ENCODE measurements at regions of chr4 and their contacts with region 1.

Region 1: DNA sequence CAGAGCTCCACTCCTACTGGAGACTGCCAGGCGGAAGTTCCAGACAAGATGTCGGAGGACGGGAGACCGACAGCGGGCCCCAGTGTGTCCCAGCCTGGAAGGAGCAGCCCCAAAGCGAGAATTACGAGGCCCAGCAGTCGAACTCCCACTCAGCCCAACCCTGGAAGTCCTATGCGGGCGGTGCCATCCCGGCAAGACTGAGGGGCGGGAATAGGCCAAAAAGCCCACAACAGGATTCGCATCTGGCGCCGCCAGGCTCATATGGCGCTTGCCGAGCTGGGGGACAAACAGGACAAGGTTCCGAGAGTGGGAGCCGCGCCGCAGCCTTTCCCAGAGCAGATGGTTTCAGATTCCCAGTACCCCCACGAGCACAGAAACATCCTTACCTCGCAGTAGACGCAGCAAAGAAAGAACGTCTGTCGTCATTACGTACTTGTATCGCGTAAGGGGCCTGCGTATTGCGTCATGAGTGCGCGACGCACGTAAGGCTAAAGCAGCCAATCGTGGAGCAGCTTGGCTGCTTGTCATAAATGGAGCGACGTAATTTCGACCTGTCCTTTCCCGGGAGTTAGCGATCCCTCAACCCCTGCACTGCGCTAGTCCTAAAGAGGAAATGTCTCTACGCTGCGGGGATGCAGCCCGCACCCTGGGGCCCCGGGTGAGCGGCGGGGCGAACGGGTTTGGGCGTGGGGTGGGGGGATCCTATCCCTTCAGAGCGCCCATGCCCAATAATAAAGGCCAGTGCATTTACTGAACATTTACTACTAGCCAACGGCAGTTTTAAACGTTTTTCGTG is at the starts of genes LIAS and RPL9:
- DNase-seq: peak; percentile 96
- H3K4me3 Mint-ChIP-seq: peak within 1 kb of the TSS; percentile 93
- H3K27ac Mint-ChIP-seq: peak within 1 kb of the TSS; percentile 97
- H3K4me1 Mint-ChIP-seq: peaks cover 48% of the 10 kb centered on the region
- H3K27me3 Mint-ChIP-seq: peaks cover 1% of the 10 kb centered on the region
- total RNA-seq, gene LIAS: 23.2 to 23.7 TPM
- total RNA-seq, gene RPL9: 2,178 to 2,222 TPM

Region 2: DNA sequence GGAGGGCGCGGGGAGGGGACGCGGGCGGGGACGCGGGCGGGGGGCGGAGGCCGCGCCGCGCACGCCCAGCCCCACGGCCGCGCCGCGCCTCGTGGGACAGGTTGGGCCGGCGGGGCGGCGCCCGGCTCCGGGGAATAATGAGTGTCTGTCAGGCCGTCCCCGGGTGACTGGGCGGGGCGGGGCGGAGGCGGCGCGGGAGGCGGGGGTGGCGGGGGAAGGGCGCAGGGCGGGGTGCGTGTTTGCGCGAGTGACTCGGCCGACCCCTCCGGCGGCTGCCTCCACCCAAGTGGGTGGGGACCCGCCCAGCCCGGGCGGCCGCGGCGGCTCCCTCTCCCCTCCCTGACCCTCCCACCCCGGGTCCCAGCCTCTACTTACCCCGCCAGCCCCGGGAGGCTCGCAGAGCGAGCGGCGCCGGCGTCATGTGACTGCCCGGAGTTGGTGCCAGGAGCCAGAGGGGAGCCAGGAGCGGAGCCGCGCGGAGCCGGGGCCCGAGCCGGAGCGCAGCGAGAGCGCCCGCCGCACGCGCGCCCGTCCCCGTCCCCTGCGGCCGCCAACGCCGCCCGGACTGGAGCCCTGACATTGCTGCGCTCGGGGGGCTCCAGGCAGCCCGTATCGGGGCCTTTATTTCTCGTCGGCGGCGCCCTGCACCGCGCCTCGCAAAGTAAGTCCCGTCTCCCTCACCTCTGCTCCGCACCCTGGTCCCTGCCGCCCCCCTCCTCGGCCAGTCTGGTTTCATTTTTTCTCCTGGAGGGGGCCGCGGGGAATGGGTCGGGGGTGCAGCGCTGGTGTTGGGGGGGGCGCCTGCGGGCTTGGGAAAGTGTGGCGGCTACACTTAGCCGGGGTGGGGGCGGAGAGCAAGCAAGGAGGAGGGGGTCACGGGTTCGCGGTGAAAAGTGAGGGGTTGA is 794.6 kb before region 1 on chr4 and contains the start of gene KLF3:
- CTCF ChIA-PET with region 1: no interaction called
- POLR2A ChIA-PET with region 1: no interaction called
- intact Hi-C with region 1: no loop called
- DNase-seq: peak; percentile 86
- H3K4me3 Mint-ChIP-seq: peak within 1 kb of the TSS; percentile 83
- H3K27ac Mint-ChIP-seq: peak within 1 kb of the TSS; percentile 68
- H3K4me1 Mint-ChIP-seq: peaks cover 61% of the 10 kb centered on the region
- H3K27me3 Mint-ChIP-seq: no peaks in the 10 kb centered on the region
- total RNA-seq, gene KLF3: 9.1 to 9.9 TPM

Region 3: GRCh38 chr4:38818441-38818976 is 640.2 kb before region 1 on chr4:
- CTCF ChIA-PET with region 1: no interaction called
- POLR2A ChIA-PET with region 1: no interaction called
- intact Hi-C with region 1: no loop called
- DNase-seq: no peak
- H3K4me3 Mint-ChIP-seq: no peak overlapping the region
- H3K27ac Mint-ChIP-seq: no peak overlapping the region
- H3K4me1 Mint-ChIP-seq: peaks cover 22% of the 10 kb centered on the region
- H3K27me3 Mint-ChIP-seq: no peaks in the 10 kb centered on the region

Region 4: GRCh38 chr4:38889143-38889542 is 569.6 kb before region 1 on chr4:
- CTCF ChIA-PET with region 1: no interaction called
- POLR2A ChIA-PET with region 1: no interaction called
- intact Hi-C with region 1: loop called (anchors 5 kb)
- DNase-seq: no peak
- H3K4me3 Mint-ChIP-seq: peak overlapping the region; percentile 48
- H3K27ac Mint-ChIP-seq: peak overlapping the region; percentile 81
- H3K4me1 Mint-ChIP-seq: peaks cover 22% of the 10 kb centered on the region
- H3K27me3 Mint-ChIP-seq: no peaks in the 10 kb centered on the region

Region 5: DNA sequence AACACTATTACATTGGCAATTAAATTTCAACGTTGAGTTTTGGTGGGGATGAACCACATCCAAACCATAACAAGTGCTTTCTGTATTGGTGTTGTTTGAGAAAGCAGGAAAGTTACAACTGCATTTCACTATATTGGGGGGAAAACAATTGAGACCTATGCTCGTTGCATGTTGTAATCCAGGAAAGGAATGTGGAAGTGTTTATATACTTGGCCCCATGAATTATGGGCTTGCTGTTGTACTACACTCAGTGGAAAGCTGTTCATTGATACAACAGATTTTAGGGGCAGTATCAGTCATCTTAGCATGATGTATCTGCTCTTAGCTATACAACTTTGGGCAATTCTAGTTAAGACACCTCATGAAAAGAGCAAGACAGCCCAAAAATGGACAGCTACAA is 344.3 kb before region 1 on chr4:
- CTCF ChIA-PET with region 1: no interaction called
- POLR2A ChIA-PET with region 1: no interaction called
- intact Hi-C with region 1: no loop called
- DNase-seq: no peak
- H3K4me3 Mint-ChIP-seq: no peak overlapping the region
- H3K27ac Mint-ChIP-seq: no peak overlapping the region
- H3K4me1 Mint-ChIP-seq: peaks cover 23% of the 10 kb centered on the region
- H3K27me3 Mint-ChIP-seq: no peaks in the 10 kb centered on the region

Region 6: GRCh38 chr4:39181905-39182638 is 276.6 kb before region 1 on chr4 and contains the start of gene WDR19:
- CTCF ChIA-PET with region 1: no interaction called
- POLR2A ChIA-PET with region 1: interaction called, 3 read pairs
- intact Hi-C with region 1: loop called (anchors 1 kb)
- DNase-seq: peak; percentile 99
- H3K4me3 Mint-ChIP-seq: no peak within 1 kb of the TSS
- H3K27ac Mint-ChIP-seq: no peak within 1 kb of the TSS
- H3K4me1 Mint-ChIP-seq: peaks cover 5% of the 10 kb centered on the region
- H3K27me3 Mint-ChIP-seq: no peaks in the 10 kb centered on the region
- total RNA-seq, gene WDR19: 16.4 to 17.9 TPM

Region 7: GRCh38 chr4:39446751-39447573 is 11.7 kb before region 1 on chr4:
- CTCF ChIA-PET with region 1: interaction called, 4 read pairs
- POLR2A ChIA-PET with region 1: interaction called, 17 read pairs
- intact Hi-C with region 1: no loop called
- DNase-seq: peak; percentile 67
- H3K4me3 Mint-ChIP-seq: peak overlapping the region; percentile 32
- H3K27ac Mint-ChIP-seq: no peak overlapping the region
- H3K4me1 Mint-ChIP-seq: peaks cover 33% of the 10 kb centered on the region
- H3K27me3 Mint-ChIP-seq: no peaks in the 10 kb centered on the region

Region 8: DNA sequence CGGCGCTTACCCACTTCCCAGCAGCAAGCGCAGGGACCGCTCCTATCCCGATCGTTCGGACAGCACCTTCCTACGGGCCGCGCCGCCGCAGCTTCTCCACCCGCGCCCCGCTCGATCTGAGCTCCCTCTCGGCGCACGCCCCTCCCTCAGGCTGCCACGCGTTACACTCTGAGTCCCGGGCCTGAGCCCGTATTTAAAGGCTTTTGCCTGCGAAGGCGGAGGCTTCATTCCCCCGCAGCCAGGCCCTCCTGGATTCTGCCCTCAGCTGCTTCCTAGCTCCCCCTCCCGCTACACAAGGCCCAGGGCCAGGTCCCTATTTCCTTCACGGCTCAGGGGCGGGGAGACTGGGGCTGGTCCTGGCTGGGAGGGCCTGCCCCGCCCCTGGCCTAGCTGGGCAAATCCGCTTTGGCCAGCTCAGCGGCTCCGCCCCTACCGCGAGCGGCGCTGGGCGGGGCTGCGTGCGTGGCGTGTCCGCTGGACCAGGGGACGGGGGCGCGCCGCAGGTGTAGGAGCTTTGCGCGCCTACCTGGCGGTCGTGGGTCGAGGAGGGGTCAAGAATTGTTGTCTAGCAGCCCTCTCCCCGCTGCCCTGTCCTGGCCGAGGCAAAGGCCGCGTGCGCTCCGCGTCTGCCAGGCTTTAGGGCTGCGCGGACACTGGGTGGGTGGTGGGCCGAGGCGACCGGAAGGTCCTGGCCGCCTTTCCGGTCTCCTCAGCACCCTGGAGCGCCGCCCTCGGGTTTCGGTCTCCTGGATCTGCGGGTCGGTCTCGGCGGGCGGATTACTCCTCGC is 68.8 kb after region 1 on chr4 and contains the start of gene UGDH:
- CTCF ChIA-PET with region 1: no interaction called
- POLR2A ChIA-PET with region 1: interaction called, 14 read pairs
- intact Hi-C with region 1: loop called (anchors 1 kb)
- DNase-seq: peak; percentile 94
- H3K4me3 Mint-ChIP-seq: peak within 1 kb of the TSS; percentile 99
- H3K27ac Mint-ChIP-seq: peak within 1 kb of the TSS; percentile 90
- H3K4me1 Mint-ChIP-seq: peaks cover 18% of the 10 kb centered on the region
- H3K27me3 Mint-ChIP-seq: no peaks in the 10 kb centered on the region
- total RNA-seq, gene UGDH: 28.7 to 32.9 TPM

Region 9: DNA sequence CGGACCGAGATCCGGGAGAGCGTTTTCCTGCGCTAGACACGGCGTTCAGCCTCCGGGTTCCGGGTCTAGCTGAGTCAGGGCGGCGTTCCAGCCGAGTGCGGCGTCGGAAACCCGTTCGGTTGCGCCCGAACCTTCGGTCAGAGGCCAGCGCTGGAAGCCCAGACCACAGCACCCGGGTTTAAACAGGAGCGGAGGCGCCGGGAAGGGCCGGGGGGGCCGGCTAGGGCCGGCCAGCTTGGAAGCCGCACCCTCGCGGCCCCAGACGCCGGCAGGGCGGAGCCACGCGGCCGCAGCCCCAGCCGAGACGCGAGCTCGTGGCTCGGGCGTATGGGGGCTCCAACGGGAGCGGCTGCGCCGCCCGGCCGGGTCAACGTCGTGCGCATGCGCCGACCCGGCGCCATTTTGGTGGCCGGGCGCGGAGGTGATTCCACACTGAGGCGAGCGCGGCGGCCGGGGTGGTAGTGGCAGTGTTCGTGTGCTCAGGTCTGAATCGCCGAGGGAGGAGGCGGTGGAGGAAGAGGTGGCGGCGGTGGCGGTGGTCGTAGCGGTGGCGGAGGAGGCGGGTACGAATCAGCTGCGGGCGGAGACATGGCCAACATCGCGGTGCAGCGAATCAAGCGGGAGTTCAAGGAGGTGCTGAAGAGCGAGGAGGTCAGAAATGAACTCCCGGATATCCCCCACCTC is 239.2 kb after region 1 on chr4 and contains the start of gene UBE2K:
- CTCF ChIA-PET with region 1: no interaction called
- POLR2A ChIA-PET with region 1: interaction called, 7 read pairs
- intact Hi-C with region 1: loop called (anchors 2 kb)
- DNase-seq: peak; percentile 92
- H3K4me3 Mint-ChIP-seq: peak within 1 kb of the TSS; percentile 96
- H3K27ac Mint-ChIP-seq: peak within 1 kb of the TSS; percentile 96
- H3K4me1 Mint-ChIP-seq: peaks cover 36% of the 10 kb centered on the region
- H3K27me3 Mint-ChIP-seq: no peaks in the 10 kb centered on the region
- total RNA-seq, gene UBE2K: 81.4 to 83.5 TPM